Dorsolateral prefrontal cortex (tissue), 120 donors: ENCODE measurements at regions of chr9 and their contacts with region 1.

Region 1: DNA sequence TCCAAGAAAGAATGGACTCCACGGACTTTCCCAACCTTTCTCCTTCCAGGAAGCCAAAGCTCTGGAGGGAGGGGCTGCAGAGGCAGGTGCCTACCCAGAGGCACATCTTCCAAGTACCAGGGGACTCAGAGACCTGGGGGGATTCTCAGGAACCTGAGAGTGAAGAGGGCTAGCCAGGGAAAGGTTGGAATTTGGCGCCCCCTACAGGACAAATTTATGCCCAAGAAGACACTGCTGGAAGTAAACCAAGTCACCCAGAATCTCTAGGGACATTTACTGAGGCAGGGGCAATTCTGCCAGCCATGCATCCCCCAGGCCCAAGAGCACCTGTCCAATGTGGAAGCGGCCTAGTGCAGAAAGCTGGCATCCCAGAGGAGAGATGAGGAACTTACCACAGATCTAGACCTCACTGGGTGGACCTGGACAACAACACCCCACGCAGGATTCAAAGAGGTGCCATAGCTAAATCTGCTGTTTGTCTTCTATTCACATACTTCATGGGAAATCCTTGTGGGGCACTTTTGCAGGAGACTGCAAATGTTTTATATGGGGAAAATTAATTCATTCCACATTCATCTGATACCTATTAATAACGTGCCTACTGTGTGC is 25.9 kb upstream of the IDNK start:
- DNase-seq: peak in 4 of 10 donors; percentile 4 to 55 (median 26)
- H3K4me3 ChIP-seq: no peak overlapping the region
- H3K27ac ChIP-seq: no peak overlapping the region
- H3K27me3 ChIP-seq: no peaks in the 10 kb centered on the region
- CTCF ChIP-seq: peak; percentile 46 to 84 (median 68)

Region 2: DNA sequence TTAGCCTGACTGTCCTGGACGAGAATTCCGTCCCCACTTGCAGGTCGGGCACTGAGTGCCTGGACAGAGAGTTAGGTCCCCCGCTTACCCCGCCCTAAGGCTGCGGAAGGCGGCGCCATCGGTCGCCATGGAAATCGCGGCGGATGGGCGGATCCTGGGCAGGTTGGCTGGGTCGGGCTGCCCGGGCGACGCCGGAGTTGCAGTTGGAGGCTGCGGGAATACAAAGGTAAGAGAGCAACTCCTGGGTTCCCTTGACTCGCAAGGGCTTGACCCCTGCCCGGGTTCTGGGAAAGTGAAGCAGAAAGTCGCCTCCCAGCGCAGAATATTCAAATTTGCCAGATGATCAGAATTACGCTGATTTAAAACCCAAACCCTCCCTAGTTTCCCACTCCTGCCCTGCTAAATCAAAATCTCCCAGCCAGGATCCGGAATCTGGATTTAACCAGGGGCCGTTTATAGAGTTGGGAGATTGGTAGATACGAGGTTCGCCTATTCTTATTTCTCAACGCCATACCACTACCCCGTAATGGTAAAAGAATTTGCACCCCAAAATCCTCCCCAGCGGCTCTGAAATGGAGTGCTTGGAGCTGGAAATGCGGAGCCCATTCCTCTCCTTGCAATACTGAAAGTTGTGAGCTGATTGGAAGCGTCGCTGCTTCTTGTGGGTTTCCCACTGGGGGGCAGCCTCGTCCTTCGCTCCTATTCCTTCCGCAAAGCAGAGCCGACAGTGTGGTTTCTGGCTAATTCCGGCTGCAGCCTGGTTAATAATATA is 377.7 kb before region 1 on chr9:
- intact Hi-C with region 1: loop called in 1 of 2 experiments (anchors 5 kb)
- DNase-seq: peak; percentile 46 to 89 (median 74)
- H3K4me3 ChIP-seq: peak overlapping the region; percentile 49 to 85 (median 66)
- H3K27ac ChIP-seq: peak overlapping the region in 23 of 59 donors; percentile 7 to 76 (median 45)
- H3K27me3 ChIP-seq: no peaks in the 10 kb centered on the region
- CTCF ChIP-seq: peak in 51 of 56 donors; percentile 7 to 82 (median 60)

Region 3: GRCh38 chr9:83334320-83334719 is 262.7 kb before region 1 on chr9:
- intact Hi-C with region 1: loop called (anchors 5 to 10 kb)
- DNase-seq: peak in 9 of 10 donors; percentile 51 to 82 (median 71)
- H3K4me3 ChIP-seq: no peak overlapping the region
- H3K27ac ChIP-seq: no peak overlapping the region
- H3K27me3 ChIP-seq: no peaks in the 10 kb centered on the region
- CTCF ChIP-seq: peak; percentile 75 to 99 (median 91)

Region 4: GRCh38 chr9:83778164-83778563 is 181.2 kb after region 1 on chr9:
- intact Hi-C with region 1: no loop called
- DNase-seq: no peak
- H3K4me3 ChIP-seq: no peak overlapping the region
- H3K27ac ChIP-seq: no peak overlapping the region
- H3K27me3 ChIP-seq: no peaks in the 10 kb centered on the region
- CTCF ChIP-seq: no peak